GM12878 (cell line): ENCODE measurements at regions of chr7 and their contacts with region 1.

Region 1: DNA sequence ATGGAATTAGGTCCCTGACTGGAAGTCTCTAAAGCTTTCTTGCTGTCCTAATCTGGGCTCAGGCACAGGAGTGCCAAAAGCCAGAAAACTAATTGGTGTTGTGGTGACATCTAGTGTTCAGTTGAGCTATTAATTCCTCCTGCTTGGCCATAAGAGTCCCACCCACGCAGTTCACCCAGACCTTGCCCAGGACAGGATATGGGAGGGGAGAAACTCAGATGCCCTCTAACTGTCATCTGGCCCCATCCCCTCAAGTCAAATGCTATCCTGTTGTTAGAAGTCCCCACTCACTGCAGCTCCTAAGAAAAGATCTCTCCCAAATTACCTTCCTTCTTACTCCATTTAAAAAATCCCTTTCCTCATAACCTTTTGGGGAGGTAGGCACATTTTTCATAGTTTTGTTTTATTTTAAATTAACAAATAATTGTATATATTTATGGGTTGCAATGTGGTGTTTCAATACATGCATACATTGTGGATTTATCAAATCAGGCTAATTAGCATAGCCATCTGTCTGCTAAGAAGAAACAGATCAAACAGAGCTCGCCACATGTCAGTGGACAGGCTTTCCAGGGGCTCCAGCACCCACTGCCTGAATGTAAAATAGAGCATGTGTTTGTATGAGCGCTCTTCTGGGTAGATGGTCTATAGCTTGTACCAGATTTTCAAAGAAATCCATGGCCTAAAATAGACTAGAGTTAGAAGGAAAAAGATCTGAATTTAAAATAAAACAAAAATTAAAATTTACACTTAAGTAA is 84.0 kb downstream of the GSAP start:
- DNase-seq: peak; percentile 95
- ATAC-seq: peak; percentile 84
- H3K4me3 ChIP-seq: no peak overlapping the region
- H3K27ac ChIP-seq: no peak overlapping the region
- H3K4me1 ChIP-seq: peaks cover 51% of the 10 kb centered on the region
- H3K27me3 ChIP-seq: no peaks in the 10 kb centered on the region
- CTCF ChIP-seq: peak; percentile 58 to 82 (median 69); a peak in 5 of 6 replicates
- EP300 ChIP-seq: no peak
- POLR2A ChIP-seq: no peak
- RAD21 ChIP-seq: peak; percentile 90

Region 2: GRCh38 chr7:77252506-77252905 is 79.6 kb before region 1 on chr7:
- CTCF ChIA-PET with region 1: interaction called, 88 read pairs
- POLR2A ChIA-PET with region 1: interaction called, 9 read pairs
- RAD21 ChIA-PET with region 1: interaction called, 87 read pairs
- SMC1A ChIA-PET with region 1: interaction called, 83 read pairs
- in situ Hi-C with region 1: loop called (anchors 5 kb)
- intact Hi-C with region 1: loop called (anchors 1 kb)
- DNase-seq: no peak
- ATAC-seq: no peak
- H3K4me3 ChIP-seq: no peak overlapping the region
- H3K27ac ChIP-seq: no peak overlapping the region
- H3K4me1 ChIP-seq: no peaks in the 10 kb centered on the region
- H3K27me3 ChIP-seq: no peaks in the 10 kb centered on the region
- CTCF ChIP-seq: no peak
- EP300 ChIP-seq: no peak
- POLR2A ChIP-seq: no peak
- RAD21 ChIP-seq: no peak

Region 3: DNA sequence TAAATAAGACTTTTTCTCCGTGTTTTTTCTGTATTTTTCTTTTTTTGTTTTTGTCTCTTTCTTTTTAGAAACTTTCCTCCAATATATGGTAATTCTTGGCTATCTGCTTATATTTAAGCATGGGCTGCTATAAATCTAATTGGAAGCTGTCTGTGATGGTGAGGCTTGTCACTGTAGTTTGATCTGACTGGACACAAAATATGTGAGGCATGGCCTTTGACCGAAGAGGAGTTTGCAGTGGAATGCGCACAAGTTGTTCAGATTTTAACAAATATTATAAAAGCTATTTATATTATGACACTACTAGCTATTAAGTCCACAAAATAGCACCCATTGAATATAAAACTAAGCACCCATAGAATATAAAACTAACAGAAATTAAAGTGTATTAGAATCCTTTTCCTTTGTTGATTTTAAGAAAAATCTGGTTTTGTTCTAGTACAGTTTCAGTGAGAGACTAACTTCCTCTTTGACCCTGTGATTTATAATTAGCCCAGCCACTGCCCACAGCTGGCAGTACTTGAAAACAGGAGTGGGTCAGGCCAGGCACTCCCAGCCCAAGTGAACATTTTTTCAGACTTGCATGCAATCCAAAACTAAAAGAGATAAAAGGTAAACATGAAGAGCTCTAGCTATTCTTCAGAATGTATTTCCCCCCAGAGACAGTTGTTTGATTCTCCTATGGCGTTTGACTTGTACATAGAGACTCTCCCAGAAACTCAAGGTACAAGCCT is 62.6 kb before region 1 on chr7:
- CTCF ChIA-PET with region 1: interaction called, 7 read pairs
- POLR2A ChIA-PET with region 1: interaction called, 6 read pairs
- RAD21 ChIA-PET with region 1: interaction called, 7 read pairs
- SMC1A ChIA-PET with region 1: interaction called, 8 read pairs
- in situ Hi-C with region 1: no loop called
- intact Hi-C with region 1: loop called (anchors 1 kb)
- DNase-seq: peak; percentile 23
- ATAC-seq: peak; percentile 79
- H3K4me3 ChIP-seq: no peak overlapping the region
- H3K27ac ChIP-seq: no peak overlapping the region
- H3K4me1 ChIP-seq: peaks cover 19% of the 10 kb centered on the region
- H3K27me3 ChIP-seq: no peaks in the 10 kb centered on the region
- CTCF ChIP-seq: no peak
- EP300 ChIP-seq: no peak
- POLR2A ChIP-seq: no peak
- RAD21 ChIP-seq: no peak

Region 4: DNA sequence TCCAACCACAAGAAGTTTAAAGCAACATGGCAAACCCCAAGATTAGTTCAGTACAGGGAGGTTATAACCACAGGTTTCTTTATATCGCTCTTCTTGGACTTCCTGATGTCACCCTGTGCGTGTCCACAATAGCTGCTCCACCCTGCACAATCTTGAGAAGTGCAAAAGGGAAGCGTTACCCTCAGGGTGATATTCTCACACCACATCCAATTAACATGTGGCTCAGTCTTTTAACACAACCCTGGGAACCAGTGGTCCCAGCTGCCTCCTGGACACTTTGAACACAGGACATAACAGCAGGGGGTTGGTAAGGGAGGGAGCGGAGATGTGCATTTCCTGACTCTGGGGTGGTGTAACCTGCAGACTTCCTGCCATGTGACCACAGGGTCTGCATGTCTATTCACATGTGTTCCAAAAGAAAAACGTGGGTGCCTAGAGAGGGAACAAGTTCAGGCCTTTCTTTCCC is 19.5 kb after region 1 on chr7:
- CTCF ChIA-PET with region 1: interaction called, 9 read pairs
- POLR2A ChIA-PET with region 1: interaction called, 5 read pairs
- RAD21 ChIA-PET with region 1: interaction called, 12 read pairs
- SMC1A ChIA-PET with region 1: interaction called, 9 read pairs
- in situ Hi-C with region 1: no loop called
- intact Hi-C with region 1: no loop called
- DNase-seq: peak; percentile 98
- ATAC-seq: peak; percentile 94
- H3K4me3 ChIP-seq: no peak overlapping the region
- H3K27ac ChIP-seq: peak overlapping the region; percentile 61
- H3K4me1 ChIP-seq: peaks cover 23% of the 10 kb centered on the region
- H3K27me3 ChIP-seq: no peaks in the 10 kb centered on the region
- CTCF ChIP-seq: no peak
- EP300 ChIP-seq: peak; percentile 91 to 92; a peak in 3 of 4 replicates
- POLR2A ChIP-seq: peak; percentile 56; the same call in 1 of the 2 replicates
- RAD21 ChIP-seq: 0 out of 2 replicates have a peak, but pooled peaks have one; percentile 1

Region 5: GRCh38 chr7:77368974-77369373 is 36.9 kb after region 1 on chr7:
- CTCF ChIA-PET with region 1: no interaction called
- POLR2A ChIA-PET with region 1: no interaction called
- RAD21 ChIA-PET with region 1: no interaction called
- SMC1A ChIA-PET with region 1: no interaction called
- in situ Hi-C with region 1: no loop called
- intact Hi-C with region 1: no loop called
- DNase-seq: no peak
- ATAC-seq: peak; percentile 49; the same call in 1 of the 3 replicates
- H3K4me3 ChIP-seq: no peak overlapping the region
- H3K27ac ChIP-seq: no peak overlapping the region
- H3K4me1 ChIP-seq: no peaks in the 10 kb centered on the region
- H3K27me3 ChIP-seq: no peaks in the 10 kb centered on the region
- CTCF ChIP-seq: peak; percentile 2 to 27 (median 8); a peak in 2 of 6 replicates
- EP300 ChIP-seq: no peak
- POLR2A ChIP-seq: no peak
- RAD21 ChIP-seq: peak; percentile 27; the same call in 1 of the 2 replicates

Region 6: DNA sequence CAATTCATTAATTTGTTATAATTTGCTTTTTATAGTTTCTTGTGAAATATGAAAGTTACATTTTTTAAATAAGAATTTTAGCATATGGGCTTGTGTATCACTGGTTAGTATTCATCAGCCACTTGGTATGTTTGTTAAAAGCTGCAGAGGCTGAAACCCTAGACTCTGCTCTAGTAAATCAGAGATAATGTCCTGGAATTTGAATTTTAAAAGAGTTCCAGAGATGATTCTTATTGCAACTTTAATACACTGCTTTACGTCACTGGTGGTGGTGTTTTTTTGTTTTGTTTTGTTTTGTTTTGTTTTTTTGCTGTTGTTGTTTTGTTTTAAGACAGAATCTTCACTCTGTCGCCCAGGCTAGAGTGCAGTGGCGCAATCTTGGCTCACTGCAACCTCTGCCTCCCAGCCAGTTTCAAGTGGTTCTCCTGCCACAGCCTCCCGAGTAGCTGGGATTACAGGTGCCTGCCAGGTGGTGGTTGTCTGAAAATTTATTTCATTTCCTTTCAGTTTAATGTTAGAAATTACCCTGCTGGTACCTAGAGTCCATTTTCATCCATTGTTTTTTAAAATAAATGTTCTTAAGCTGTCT is 248.7 kb after region 1 on chr7:
- CTCF ChIA-PET with region 1: no interaction called
- POLR2A ChIA-PET with region 1: no interaction called
- RAD21 ChIA-PET with region 1: no interaction called
- SMC1A ChIA-PET with region 1: no interaction called
- in situ Hi-C with region 1: no loop called
- intact Hi-C with region 1: no loop called
- DNase-seq: no peak
- ATAC-seq: no peak
- H3K4me3 ChIP-seq: no peak overlapping the region
- H3K27ac ChIP-seq: no peak overlapping the region
- H3K4me1 ChIP-seq: no peaks in the 10 kb centered on the region
- H3K27me3 ChIP-seq: no peaks in the 10 kb centered on the region
- CTCF ChIP-seq: no peak
- EP300 ChIP-seq: no peak
- POLR2A ChIP-seq: no peak
- RAD21 ChIP-seq: no peak